Activated T-helper 2 cell treated with anti-CD3 and anti-CD28 coated beads, Interferon-gamma antibody, Interleukin-2, Interleukin-4, amounts not matched to agents 10 μg/mL and 5 μg/mL and 100 μg/mL, durations not matched to agents 14 hours and 24 hours and 36 hours (primary cell): ENCODE measurements at regions of chr17 and their contacts with region 1.

Region 1: GRCh38 chr17:17356149-17356930 is 53.2 kb downstream of the NT5M start:
- DNase-seq: peak; percentile 52
- H3K4me3 Mint-ChIP-seq: no peak overlapping the region
- H3K27ac Mint-ChIP-seq: no peak overlapping the region
- H3K4me1 Mint-ChIP-seq: no peaks in the 10 kb centered on the region
- H3K27me3 Mint-ChIP-seq: peaks cover 21% of the 10 kb centered on the region

Region 2: DNA sequence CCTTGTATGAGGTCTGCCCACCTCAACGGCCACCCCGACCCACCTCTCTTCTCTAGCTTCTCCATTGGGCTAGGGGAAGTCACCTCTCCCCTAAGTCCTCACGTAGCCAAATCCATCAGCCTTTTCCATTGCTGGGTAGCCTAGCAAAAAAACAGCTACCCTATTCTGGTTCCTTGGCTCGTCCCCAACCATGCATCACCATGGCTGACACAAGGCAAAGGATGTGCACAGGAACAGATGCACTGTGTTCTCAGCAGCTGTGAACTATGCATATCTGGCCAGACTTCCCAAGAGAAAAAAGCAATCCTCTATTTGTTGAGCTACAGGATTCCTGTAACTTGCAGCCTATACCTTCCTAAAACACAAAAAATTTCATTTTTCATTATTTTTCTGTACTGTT is 97.3 kb before region 1 on chr17:
- intact Hi-C with region 1: no loop called
- DNase-seq: no peak
- H3K4me3 Mint-ChIP-seq: no peak overlapping the region
- H3K27ac Mint-ChIP-seq: no peak overlapping the region
- H3K4me1 Mint-ChIP-seq: no peaks in the 10 kb centered on the region
- H3K27me3 Mint-ChIP-seq: no peaks in the 10 kb centered on the region

Region 3: DNA sequence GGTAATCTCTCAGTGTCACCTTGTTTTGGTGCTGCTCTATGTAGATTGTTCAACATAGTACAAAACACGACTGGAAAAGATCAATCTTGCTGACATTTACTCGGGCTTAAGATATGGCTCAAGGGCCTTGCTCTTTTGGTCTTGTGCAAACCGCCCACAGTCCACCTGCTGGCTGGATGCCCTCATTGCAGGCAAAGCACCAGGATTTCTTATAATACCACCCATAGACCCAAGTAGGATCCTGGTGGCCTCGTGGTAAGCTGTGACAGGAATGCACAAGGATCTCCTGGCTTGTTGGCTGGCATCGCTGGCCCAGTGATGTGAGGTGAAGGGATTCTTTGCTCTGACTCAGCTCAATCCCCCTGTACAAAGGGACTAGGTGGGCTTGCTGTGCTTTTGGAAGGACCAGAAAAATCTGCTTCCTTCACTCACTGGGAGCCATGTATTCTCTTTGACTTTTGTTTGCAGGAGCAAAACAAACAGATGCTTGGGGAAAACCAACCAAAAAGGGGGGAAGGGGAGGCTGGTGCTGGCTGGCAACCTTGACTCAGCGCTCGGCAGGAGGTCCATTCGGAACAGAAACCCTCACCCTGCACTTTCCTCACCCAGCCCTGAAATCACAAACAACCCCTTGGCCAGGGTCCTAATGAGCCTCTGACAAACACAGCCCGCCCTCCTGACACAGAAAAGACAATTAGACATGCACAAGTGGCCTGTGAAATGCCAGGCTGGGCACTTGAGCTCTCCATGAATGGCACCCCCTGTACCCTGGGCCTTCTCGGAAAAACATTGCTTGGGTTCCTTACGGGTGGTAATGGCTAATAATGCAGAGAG is 83.9 kb after region 1 on chr17:
- intact Hi-C with region 1: loop called (anchors 1 kb)
- DNase-seq: peak; percentile 51
- H3K4me3 Mint-ChIP-seq: no peak overlapping the region
- H3K27ac Mint-ChIP-seq: no peak overlapping the region
- H3K4me1 Mint-ChIP-seq: peaks cover 2% of the 10 kb centered on the region
- H3K27me3 Mint-ChIP-seq: no peaks in the 10 kb centered on the region

Region 4: DNA sequence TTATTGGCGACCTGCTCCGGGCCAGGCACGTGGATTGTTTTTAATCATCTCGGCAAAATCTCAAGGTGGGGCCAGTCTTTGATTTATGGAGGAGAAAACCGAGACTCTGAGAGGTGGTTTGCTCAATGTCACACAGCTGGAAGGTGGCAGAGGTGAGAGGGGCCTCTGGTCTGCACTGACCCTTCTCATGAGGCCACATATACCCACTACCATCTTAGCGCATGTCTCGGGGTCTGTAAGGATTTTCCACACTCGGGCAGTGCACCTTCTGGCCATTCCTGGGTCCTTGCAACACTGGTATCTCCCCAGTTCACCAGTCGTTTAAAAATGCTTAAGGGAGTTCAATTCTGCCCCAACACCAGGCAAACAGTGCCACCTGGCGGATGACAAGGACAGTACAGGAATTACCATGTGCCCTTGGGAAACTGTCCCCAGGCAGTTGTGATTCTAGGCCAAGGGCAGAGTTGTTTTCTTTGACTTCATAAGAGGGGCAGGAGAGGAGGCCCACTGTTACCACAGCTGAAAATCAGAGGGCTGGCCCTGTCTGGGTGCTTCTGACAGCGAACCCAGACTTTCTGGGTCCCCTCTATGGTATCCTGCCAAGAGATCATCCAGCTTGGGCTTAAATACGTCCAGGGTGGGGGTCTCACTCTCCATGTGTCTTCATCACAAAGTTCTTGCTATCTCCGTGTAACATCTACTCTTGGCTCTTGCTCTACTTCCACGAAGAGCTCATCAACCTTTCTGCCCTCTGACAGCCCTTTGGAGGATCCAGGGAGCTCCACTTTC is 285.5 kb after region 1 on chr17:
- intact Hi-C with region 1: loop called (anchors 1 kb)
- DNase-seq: peak; percentile 67
- H3K4me3 Mint-ChIP-seq: no peak overlapping the region
- H3K27ac Mint-ChIP-seq: no peak overlapping the region
- H3K4me1 Mint-ChIP-seq: no peaks in the 10 kb centered on the region
- H3K27me3 Mint-ChIP-seq: no peaks in the 10 kb centered on the region